WTC11 (cell line): ENCODE measurements at regions of chr12 and their contacts with region 1.

Region 1: GRCh38 chr12:113462117-113462774 is 9.4 kb downstream of the LHX5 start:
- DNase-seq: peak; percentile 89
- ATAC-seq: peak; percentile 12
- H3K4me3 Mint-ChIP-seq: peak overlapping the region; percentile 75
- H3K27ac Mint-ChIP-seq: no peak overlapping the region
- H3K4me1 Mint-ChIP-seq: peaks cover 35% of the 10 kb centered on the region
- H3K27me3 Mint-ChIP-seq: peaks cover 78% of the 10 kb centered on the region
- CTCF ChIP-seq: peak; percentile 81; the same call in 1 of the 2 replicates

Region 2: DNA sequence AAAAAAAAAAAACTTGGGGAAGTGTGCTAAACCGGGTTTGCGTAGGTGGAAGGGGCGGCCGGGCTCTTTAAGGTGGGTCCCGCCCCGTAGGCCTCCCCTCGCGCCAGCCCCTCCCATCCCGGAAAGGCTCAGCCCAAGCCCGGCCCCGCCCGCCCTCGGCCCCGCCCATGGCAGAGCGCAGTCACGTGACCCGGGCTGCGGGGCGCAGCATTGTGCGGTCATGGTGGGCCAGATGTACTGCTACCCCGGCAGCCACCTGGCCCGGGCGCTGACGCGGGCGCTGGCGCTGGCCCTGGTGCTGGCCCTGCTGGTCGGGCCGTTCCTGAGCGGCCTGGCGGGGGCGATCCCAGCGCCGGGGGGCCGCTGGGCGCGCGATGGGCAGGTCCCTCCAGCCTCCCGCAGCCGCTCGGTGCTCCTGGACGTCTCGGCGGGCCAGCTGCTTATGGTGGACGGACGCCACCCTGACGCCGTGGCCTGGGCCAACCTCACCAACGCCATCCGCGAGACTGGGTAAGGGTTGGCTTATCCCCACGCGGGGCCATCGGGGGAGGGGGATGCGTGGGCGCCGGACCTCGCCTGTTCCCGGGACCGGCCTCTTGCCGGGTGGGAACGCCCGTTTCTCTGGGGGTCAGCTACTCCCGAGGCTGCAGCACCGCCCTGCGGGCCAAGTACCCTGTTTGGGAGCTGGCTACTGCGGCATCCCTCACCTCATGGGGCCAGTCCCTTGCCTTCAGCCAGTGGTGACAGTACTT is 103.7 kb before region 1 on chr12 and contains the start of gene PLBD2:
- CTCF ChIA-PET with region 1: no interaction called
- POLR2A ChIA-PET with region 1: no interaction called
- DNase-seq: peak; percentile 95
- ATAC-seq: peak; percentile 95
- H3K4me3 Mint-ChIP-seq: peak within 1 kb of the TSS; percentile 88
- H3K27ac Mint-ChIP-seq: peak within 1 kb of the TSS; percentile 78
- H3K4me1 Mint-ChIP-seq: peaks cover 18% of the 10 kb centered on the region
- H3K27me3 Mint-ChIP-seq: no peaks in the 10 kb centered on the region
- CTCF ChIP-seq: no peak
- total RNA-seq, gene PLBD2: 34.8 to 39.4 TPM (median 35.6 TPM) in 3 replicates

Region 3: DNA sequence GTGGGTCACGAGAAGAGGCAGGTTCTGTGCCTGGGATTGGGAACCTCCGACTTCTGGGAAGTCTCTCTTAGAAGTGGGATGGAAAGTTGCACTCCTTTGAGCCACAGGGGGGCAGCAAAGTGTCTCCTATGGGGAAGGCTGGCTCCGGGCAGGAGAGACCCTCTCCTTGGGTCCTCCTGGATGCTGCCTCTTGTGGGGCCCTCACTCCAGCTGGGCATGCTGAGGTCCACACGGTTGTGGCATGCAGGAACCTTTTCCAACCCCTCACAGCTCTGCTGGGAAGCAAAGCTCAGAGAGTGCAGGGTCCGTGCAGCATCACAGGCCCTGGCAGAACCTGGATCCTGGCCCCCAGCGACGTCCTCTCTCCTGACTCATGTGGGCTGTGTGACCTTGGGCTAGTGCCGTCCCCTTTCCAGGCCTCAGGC is 22.6 kb before region 1 on chr12:
- CTCF ChIA-PET with region 1: interaction called, 24 read pairs
- POLR2A ChIA-PET with region 1: no interaction called
- DNase-seq: peak; percentile 85
- ATAC-seq: peak; percentile 94
- H3K4me3 Mint-ChIP-seq: no peak overlapping the region
- H3K27ac Mint-ChIP-seq: no peak overlapping the region
- H3K4me1 Mint-ChIP-seq: peaks cover 3% of the 10 kb centered on the region; the same call in 1 of the 2 replicates
- H3K27me3 Mint-ChIP-seq: no peaks in the 10 kb centered on the region
- CTCF ChIP-seq: peak; percentile 68

Region 4: GRCh38 chr12:113500782-113501311 is 38.6 kb after region 1 on chr12:
- CTCF ChIA-PET with region 1: interaction called, 10 read pairs
- POLR2A ChIA-PET with region 1: no interaction called
- DNase-seq: no peak
- ATAC-seq: peak; percentile 83
- H3K4me3 Mint-ChIP-seq: peak overlapping the region; percentile 7
- H3K27ac Mint-ChIP-seq: 0 out of 2 replicates have a peak overlapping the region, but pooled peaks have one; percentile 6
- H3K4me1 Mint-ChIP-seq: peaks cover 28% of the 10 kb centered on the region
- H3K27me3 Mint-ChIP-seq: no peaks in the 10 kb centered on the region; the same call in 1 of the 2 replicates
- CTCF ChIP-seq: no peak

Region 5: DNA sequence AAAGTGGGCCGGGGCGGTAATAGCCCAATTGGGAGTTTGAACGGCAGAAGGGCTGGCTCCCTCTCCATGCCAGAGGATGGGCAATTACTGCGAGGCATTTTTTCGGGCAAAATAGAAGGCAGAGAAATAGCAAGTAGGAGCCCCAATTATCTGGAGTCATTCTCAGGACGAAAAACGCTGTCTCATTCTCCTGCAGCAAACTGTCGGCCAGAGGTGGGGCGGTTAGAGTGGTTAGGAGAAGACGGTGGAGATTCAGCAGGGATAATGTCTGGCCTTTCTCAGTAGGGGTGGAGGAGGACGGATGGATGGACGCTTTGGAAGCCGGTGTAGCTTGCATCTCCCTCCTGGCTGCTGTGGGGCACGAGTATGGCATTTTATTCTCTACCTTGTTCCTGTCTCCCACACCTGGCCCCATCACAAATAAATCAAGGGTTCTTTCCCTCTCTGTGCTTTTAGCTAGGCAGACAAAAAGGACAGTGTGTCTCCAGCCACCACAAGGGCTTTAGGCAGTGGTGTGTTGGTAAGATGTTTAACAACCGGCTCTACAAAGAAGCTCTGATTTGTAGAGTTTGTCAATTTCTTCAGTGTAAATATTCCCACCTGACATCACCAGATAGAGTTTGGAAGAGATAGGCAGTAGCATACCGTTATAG is 150.0 kb after region 1 on chr12:
- CTCF ChIA-PET with region 1: interaction called, 17 read pairs
- POLR2A ChIA-PET with region 1: no interaction called
- DNase-seq: no peak
- ATAC-seq: no peak
- H3K4me3 Mint-ChIP-seq: peak overlapping the region; percentile 59; the same call in 1 of the 2 replicates
- H3K27ac Mint-ChIP-seq: no peak overlapping the region
- H3K4me1 Mint-ChIP-seq: peaks cover 40% of the 10 kb centered on the region
- H3K27me3 Mint-ChIP-seq: peaks cover 16% of the 10 kb centered on the region
- CTCF ChIP-seq: no peak

Region 6: GRCh38 chr12:113720629-113721028 is 258.4 kb after region 1 on chr12:
- CTCF ChIA-PET with region 1: interaction called, 15 read pairs
- POLR2A ChIA-PET with region 1: no interaction called
- DNase-seq: no peak
- ATAC-seq: no peak
- H3K4me3 Mint-ChIP-seq: no peak overlapping the region
- H3K27ac Mint-ChIP-seq: no peak overlapping the region
- H3K4me1 Mint-ChIP-seq: peaks cover 2% of the 10 kb centered on the region; the same call in 1 of the 2 replicates
- H3K27me3 Mint-ChIP-seq: peaks cover 5% of the 10 kb centered on the region
- CTCF ChIP-seq: no peak

Region 7: GRCh38 chr12:113826805-113827538 is 364.7 kb after region 1 on chr12:
- CTCF ChIA-PET with region 1: interaction called, 12 read pairs
- POLR2A ChIA-PET with region 1: no interaction called
- DNase-seq: peak; percentile 29
- ATAC-seq: no peak; the same call in 1 of the 2 replicates
- H3K4me3 Mint-ChIP-seq: no peak overlapping the region
- H3K27ac Mint-ChIP-seq: no peak overlapping the region
- H3K4me1 Mint-ChIP-seq: peaks cover 7% of the 10 kb centered on the region
- H3K27me3 Mint-ChIP-seq: no peaks in the 10 kb centered on the region
- CTCF ChIP-seq: no peak